ENCODE measurements at regions of chr16 and their contacts with region 1.

Region 1: DNA sequence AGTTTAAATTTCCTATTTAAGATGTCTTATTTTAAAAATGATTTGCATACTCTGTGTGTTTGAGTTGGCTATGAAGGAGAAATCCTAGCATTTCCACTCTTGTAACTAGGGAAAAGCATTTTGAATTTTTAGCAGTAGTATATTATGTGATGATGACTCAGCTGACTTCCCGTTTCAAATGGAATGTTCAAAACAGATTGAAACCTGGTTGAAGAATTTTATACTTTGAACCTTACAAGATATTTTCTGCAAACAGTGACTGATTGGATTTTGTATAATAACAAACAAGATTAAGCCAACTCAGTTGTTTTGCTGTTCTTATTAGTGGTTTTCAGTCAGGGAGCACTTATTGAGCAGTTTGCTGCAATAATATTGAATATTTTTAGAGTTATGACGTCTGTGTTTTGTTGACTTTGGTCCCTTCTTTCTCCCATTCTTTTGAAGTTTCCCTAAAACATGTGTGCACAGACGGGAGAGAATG is 8.0 kb downstream of the TNRC6A start:
- DNase-seq: peak; percentile 83
- H3K4me3 ChIP-seq: peak overlapping the region in 1 of 3 experiments; percentile 20
- H3K27ac ChIP-seq: peak overlapping the region; percentile 63
- H3K4me1 ChIP-seq: peaks cover 37% of the 10 kb centered on the region
- H3K27me3 ChIP-seq: no peaks in the 10 kb centered on the region
- CTCF ChIP-seq: no peak
- POLR2A ChIP-seq: no peak

Region 2: GRCh38 chr16:24635900-24636610 is 101.4 kb before region 1 on chr16:
- CTCF ChIA-PET with region 1: no interaction called
- POLR2A ChIA-PET with region 1: no interaction called
- dilution Hi-C with region 1: no loop called
- intact Hi-C with region 1: no loop called
- DNase-seq: peak; percentile 77
- H3K4me3 ChIP-seq: no peak overlapping the region
- H3K27ac ChIP-seq: no peak overlapping the region
- H3K4me1 ChIP-seq: peaks cover 7% of the 10 kb centered on the region
- H3K27me3 ChIP-seq: no peaks in the 10 kb centered on the region
- CTCF ChIP-seq: no peak
- POLR2A ChIP-seq: no peak

Region 3: DNA sequence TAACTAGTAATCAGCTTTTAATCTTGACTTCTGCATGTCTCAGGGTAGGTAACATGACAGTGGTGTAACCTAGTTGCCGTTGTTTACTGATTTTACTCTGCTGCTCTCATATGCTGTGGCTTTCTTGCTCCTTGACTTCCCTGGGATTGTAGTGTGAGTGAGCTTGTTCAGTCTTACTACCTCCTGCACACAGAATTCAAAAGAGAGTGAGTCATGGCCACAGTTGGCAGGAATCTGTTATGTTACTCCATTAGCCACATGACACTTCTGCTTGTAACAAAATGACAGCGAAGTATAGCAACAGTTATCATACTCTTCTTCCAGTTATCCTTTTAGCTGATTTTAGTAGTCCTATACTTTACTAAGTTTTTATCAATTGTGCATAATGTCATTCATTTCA is 10.8 kb after region 1 on chr16:
- CTCF ChIA-PET with region 1: interaction called, 10 read pairs
- POLR2A ChIA-PET with region 1: no interaction called
- dilution Hi-C with region 1: no loop called
- intact Hi-C with region 1: loop called (anchors 1 kb)
- DNase-seq: peak; percentile 90
- H3K4me3 ChIP-seq: no peak overlapping the region
- H3K27ac ChIP-seq: peak overlapping the region; percentile 47
- H3K4me1 ChIP-seq: peaks cover 36% of the 10 kb centered on the region
- H3K27me3 ChIP-seq: no peaks in the 10 kb centered on the region
- CTCF ChIP-seq: no peak
- POLR2A ChIP-seq: no peak